Left cardiac atrium (tissue), 4 donors: ENCODE measurements at regions of chr16 and their contacts with region 1.

Region 1: GRCh38 chr16:49855280-49855821 is 561 bp downstream of the ZNF423 start:
- DNase-seq: peak; percentile 87
- ATAC-seq: peak; percentile 77 to 84

Region 2: GRCh38 chr16:49556606-49557446 is 298.5 kb before region 1 on chr16:
- intact Hi-C with region 1: loop called in 1 of 2 experiments (anchors 5 kb)
- DNase-seq: no peak
- ATAC-seq: no peak

Region 3: GRCh38 chr16:49620158-49620868 is 235.0 kb before region 1 on chr16:
- intact Hi-C with region 1: loop called in 1 of 2 experiments (anchors 10 kb)
- DNase-seq: peak; percentile 88
- ATAC-seq: peak; percentile 87

Region 4: GRCh38 chr16:49755313-49755620 is 100.1 kb before region 1 on chr16:
- intact Hi-C with region 1: loop called (anchors 10 kb)
- DNase-seq: no peak
- ATAC-seq: peak; percentile 74 to 78